Cardiac septum (tissue), 1 donor: ENCODE measurements at regions of chr13 and their contacts with region 1.

Region 1: DNA sequence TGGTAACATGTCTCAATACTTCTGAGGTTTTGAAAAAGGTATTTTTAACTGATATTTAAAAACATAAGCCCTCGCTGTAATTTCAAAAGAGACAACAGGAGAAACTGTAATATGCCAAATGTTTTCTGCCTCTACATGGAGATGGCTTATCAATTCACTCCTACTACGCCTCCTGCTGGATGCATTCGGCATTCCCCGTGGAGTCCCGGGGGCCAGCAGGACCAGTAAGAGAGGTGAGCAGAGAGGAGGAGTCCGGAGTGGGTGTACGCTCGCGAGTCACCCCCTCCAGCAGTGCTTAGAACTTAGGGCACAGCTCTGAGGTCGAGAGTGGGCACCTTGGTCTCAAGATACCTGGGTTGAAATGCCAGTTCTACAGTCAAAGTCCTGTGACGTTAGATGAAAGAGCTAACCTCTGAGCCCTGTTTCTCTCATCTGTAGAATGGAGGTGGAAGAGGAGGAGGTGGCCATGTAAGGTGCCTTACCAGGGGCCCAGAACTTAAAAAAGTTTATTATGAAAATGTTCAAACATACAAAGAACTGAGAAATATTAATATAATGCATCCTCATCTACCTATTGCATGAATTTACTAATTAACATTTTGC is 110.2 kb downstream of the STK24 start:
- DNase-seq: no peak

Region 2: GRCh38 chr13:98454389-98454881 is 12.3 kb before region 1 on chr13:
- intact Hi-C with region 1: no loop called
- DNase-seq: no peak

Region 3: DNA sequence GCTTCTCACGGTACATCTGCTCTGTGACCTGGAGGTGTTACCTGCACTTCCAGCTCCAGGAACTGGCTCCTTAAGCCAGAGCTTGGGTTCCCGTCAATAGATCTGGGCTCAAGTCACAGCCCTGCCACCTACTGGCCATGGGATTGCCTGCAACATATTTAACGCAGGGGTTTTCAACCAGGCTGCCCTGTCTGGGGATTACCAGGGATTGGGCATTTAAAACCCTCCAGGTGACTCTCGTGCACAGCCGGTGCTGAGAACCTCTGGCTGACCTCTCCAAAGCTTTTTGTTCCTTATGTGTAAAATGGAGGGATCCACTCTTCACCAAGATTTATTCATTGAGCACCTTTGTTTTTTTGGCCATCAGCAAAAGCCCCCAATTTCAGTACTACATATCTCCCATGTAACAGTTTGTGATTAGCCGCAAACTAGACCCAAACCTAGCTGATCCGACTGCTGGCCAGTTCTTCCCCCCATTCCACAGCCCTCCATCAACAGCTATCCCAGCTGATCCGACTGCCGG is 186.8 kb after region 1 on chr13:
- intact Hi-C with region 1: loop called (anchors 5 kb)
- DNase-seq: peak; percentile 87

Region 4: GRCh38 chr13:99347911-99348451 is 881.2 kb after region 1 on chr13:
- intact Hi-C with region 1: no loop called
- DNase-seq: no peak